CD8-positive, alpha-beta T cell (primary cell): ENCODE measurements at regions of chr9 and their contacts with region 1.

Region 1: GRCh38 chr9:73081979-73082657 is 69.5 kb upstream of the ANXA1 start:
- DNase-seq: peak in 2 of 9 experiments; percentile 33 to 43
- ATAC-seq: no peak
- H3K4me3 ChIP-seq: no peak overlapping the region
- H3K4me3 Mint-ChIP-seq: no peak overlapping the region
- H3K27ac ChIP-seq: no peak overlapping the region
- H3K27ac Mint-ChIP-seq: no peak overlapping the region
- H3K4me1 ChIP-seq: no peaks in the 10 kb centered on the region
- H3K4me1 Mint-ChIP-seq: no peaks in the 10 kb centered on the region
- H3K27me3 ChIP-seq: peaks cover 0 to 2% of the 10 kb centered on the region in 2 experiments
- H3K27me3 Mint-ChIP-seq: peaks cover 12% of the 10 kb centered on the region
- CTCF ChIP-seq: peak; percentile 75

Region 2: GRCh38 chr9:72038890-72039410 is 1043.2 kb before region 1 on chr9:
- CTCF ChIA-PET with region 1: no interaction called
- POLR2A ChIA-PET with region 1: no interaction called
- intact Hi-C with region 1: loop called in 1 of 2 experiments (anchors 1 kb)
- DNase-seq: peak; percentile 22 to 78 (median 61)
- ATAC-seq: peak; percentile 67
- H3K4me3 ChIP-seq: no peak overlapping the region
- H3K4me3 Mint-ChIP-seq: no peak overlapping the region
- H3K27ac ChIP-seq: no peak overlapping the region
- H3K27ac Mint-ChIP-seq: no peak overlapping the region
- H3K4me1 ChIP-seq: no peaks in the 10 kb centered on the region
- H3K4me1 Mint-ChIP-seq: peaks cover 5% of the 10 kb centered on the region
- H3K27me3 ChIP-seq: no peaks in the 10 kb centered on the region
- H3K27me3 Mint-ChIP-seq: peaks cover 16% of the 10 kb centered on the region
- CTCF ChIP-seq: peak; percentile 87

Region 3: GRCh38 chr9:72871685-72872084 is 210.4 kb before region 1 on chr9:
- CTCF ChIA-PET with region 1: no interaction called
- POLR2A ChIA-PET with region 1: no interaction called
- intact Hi-C with region 1: loop called in 1 of 2 experiments (anchors 10 kb)
- DNase-seq: no peak
- ATAC-seq: no peak
- H3K4me3 ChIP-seq: no peak overlapping the region
- H3K4me3 Mint-ChIP-seq: no peak overlapping the region
- H3K27ac ChIP-seq: no peak overlapping the region
- H3K27ac Mint-ChIP-seq: no peak overlapping the region
- H3K4me1 ChIP-seq: no peaks in the 10 kb centered on the region
- H3K4me1 Mint-ChIP-seq: no peaks in the 10 kb centered on the region
- H3K27me3 ChIP-seq: no peaks in the 10 kb centered on the region
- H3K27me3 Mint-ChIP-seq: peaks cover 11% of the 10 kb centered on the region
- CTCF ChIP-seq: no peak

Region 4: DNA sequence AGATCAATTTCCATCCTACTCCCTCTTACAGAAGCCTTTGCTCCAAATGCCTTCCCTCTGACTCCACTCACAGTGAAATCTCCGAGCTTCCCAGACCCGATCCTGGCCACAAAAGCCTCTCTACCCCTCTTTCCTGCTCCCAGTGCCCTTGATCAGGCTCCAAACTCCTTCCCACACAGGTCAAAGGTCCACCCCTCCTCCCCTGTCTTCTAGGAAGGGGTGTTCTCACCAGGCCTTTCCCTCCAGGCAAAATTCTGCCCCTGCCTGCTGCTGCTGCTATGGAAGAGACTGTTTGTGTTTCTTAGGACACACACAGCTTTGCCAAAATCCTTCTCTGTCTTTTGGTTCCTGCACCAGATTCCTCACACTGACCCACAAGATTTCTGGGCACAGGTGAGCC is 43.5 kb before region 1 on chr9:
- CTCF ChIA-PET with region 1: no interaction called
- POLR2A ChIA-PET with region 1: no interaction called
- intact Hi-C with region 1: no loop called
- DNase-seq: no peak
- ATAC-seq: no peak
- H3K4me3 ChIP-seq: no peak overlapping the region
- H3K4me3 Mint-ChIP-seq: no peak overlapping the region
- H3K27ac ChIP-seq: no peak overlapping the region
- H3K27ac Mint-ChIP-seq: no peak overlapping the region
- H3K4me1 ChIP-seq: no peaks in the 10 kb centered on the region
- H3K4me1 Mint-ChIP-seq: no peaks in the 10 kb centered on the region
- H3K27me3 ChIP-seq: no peaks in the 10 kb centered on the region
- H3K27me3 Mint-ChIP-seq: peaks cover 18% of the 10 kb centered on the region
- CTCF ChIP-seq: no peak